ENCODE measurements at regions of chr10 and their contacts with region 1.

Region 1: GRCh38 chr10:99732033-99732912 is at the starts of genes COX15 and CUTC:
- DNase-seq: peak; percentile 95
- H3K4me3 ChIP-seq: peak within 1 kb of the TSS; percentile 67 to 78 (median 74)
- H3K27ac ChIP-seq: peak within 1 kb of the TSS; percentile 83
- H3K4me1 ChIP-seq: peaks cover 13% of the 10 kb centered on the region
- H3K27me3 ChIP-seq: no peaks in the 10 kb centered on the region
- CTCF ChIP-seq: peak; percentile 43 to 63
- total RNA-seq, gene COX15: 26.5 to 29.5 TPM
- total RNA-seq, gene CUTC: 8.2 to 14.7 TPM

Region 2: GRCh38 chr10:99698504-99699080 is 33.7 kb before region 1 on chr10:
- CTCF ChIA-PET with region 1: no interaction called
- dilution Hi-C with region 1: no loop called
- in situ Hi-C with region 1: no loop called
- intact Hi-C with region 1: no loop called
- DNase-seq: no peak
- H3K4me3 ChIP-seq: no peak overlapping the region
- H3K27ac ChIP-seq: no peak overlapping the region
- H3K4me1 ChIP-seq: peaks cover 4% of the 10 kb centered on the region
- H3K27me3 ChIP-seq: no peaks in the 10 kb centered on the region
- CTCF ChIP-seq: peak in 1 of 2 donors; percentile 19

Region 3: DNA sequence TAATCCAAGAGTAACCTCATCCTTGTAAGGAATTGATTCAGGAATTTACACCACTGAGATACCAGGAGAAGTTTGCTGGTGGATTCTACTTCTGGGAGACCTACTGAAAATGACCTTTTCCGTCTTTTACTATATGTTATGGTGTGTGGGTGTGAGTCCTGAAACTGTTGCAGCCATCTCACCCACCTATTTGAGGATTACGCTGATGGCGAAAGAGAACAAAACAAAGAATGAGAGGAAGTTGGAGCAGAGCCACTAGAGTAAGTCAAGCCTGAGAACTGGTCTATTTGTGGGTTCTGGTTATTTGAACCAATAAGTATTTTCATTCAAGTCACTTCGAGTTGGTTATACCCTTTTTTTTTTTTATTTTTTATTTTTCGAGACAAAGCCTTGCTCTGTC is 37.4 kb after region 1 on chr10:
- CTCF ChIA-PET with region 1: no interaction called
- dilution Hi-C with region 1: no loop called
- in situ Hi-C with region 1: no loop called
- intact Hi-C with region 1: no loop called
- DNase-seq: no peak
- H3K4me3 ChIP-seq: no peak overlapping the region
- H3K27ac ChIP-seq: no peak overlapping the region
- H3K4me1 ChIP-seq: no peaks in the 10 kb centered on the region
- H3K27me3 ChIP-seq: no peaks in the 10 kb centered on the region
- CTCF ChIP-seq: no peak

Region 4: DNA sequence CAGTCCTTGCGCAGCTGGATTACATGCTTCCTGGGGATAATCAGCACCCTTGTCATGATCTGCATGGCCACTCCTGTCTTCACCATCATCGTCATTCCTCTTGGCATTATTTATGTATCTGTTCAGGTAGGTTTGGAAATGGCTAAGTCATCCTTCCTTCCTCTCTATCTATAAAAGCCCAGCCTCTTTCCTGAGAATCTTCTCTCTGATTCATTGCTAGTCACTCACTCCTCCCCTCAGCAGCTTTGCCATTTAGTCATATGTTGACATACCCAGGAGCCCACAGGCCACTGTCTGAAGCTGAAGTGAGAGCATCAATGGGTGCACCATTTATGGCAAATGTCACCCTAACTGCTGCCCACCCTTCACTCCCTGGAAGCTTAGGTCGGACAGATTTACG is 102.1 kb after region 1 on chr10:
- CTCF ChIA-PET with region 1: no interaction called
- dilution Hi-C with region 1: no loop called
- in situ Hi-C with region 1: no loop called
- intact Hi-C with region 1: loop called (anchors 2 kb)
- DNase-seq: peak; percentile 91
- H3K4me3 ChIP-seq: no peak overlapping the region
- H3K27ac ChIP-seq: peak overlapping the region; percentile 85
- H3K4me1 ChIP-seq: peaks cover 14% of the 10 kb centered on the region
- H3K27me3 ChIP-seq: no peaks in the 10 kb centered on the region
- CTCF ChIP-seq: no peak

Region 5: GRCh38 chr10:99966306-99966705 is 234.0 kb after region 1 on chr10:
- CTCF ChIA-PET with region 1: no interaction called
- dilution Hi-C with region 1: no loop called
- in situ Hi-C with region 1: no loop called
- intact Hi-C with region 1: loop called (anchors 5 kb)
- DNase-seq: peak; percentile 95
- H3K4me3 ChIP-seq: no peak overlapping the region
- H3K27ac ChIP-seq: peak overlapping the region; percentile 53
- H3K4me1 ChIP-seq: peaks cover 43% of the 10 kb centered on the region
- H3K27me3 ChIP-seq: no peaks in the 10 kb centered on the region
- CTCF ChIP-seq: no peak

Region 6: DNA sequence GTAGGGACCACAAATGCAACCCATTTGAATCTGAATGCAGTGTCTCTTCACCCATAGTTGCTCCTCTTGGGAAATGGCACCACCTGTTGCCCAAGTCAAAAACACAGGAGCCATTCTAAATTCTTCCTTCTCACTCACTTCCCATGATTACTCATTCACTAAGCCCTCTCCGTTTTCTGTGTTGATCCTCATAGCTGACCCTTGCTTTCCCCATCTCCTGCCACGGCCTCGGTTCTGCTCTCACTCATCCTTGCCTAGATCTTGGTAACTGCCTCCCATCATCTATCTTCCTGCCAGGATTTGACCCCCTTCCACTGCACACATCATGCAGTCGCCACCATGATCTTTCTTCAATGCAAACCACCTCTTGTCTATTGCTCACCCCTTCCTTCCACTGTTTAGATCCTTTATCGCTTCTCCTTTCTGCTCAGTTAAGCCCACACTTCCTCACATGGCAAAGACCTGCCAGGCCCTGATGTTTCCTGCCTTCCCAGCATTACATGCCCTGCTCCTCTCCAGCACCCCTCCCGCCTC is 368.4 kb after region 1 on chr10:
- CTCF ChIA-PET with region 1: no interaction called
- dilution Hi-C with region 1: no loop called
- in situ Hi-C with region 1: no loop called
- intact Hi-C with region 1: loop called (anchors 2 kb)
- DNase-seq: peak; percentile 25
- H3K4me3 ChIP-seq: no peak overlapping the region
- H3K27ac ChIP-seq: no peak overlapping the region
- H3K4me1 ChIP-seq: no peaks in the 10 kb centered on the region
- H3K27me3 ChIP-seq: peaks cover 1% of the 10 kb centered on the region
- CTCF ChIP-seq: peak; percentile 13 to 37